Transverse colon (tissue), 4 donors: ENCODE measurements at regions of chr11 and their contacts with region 1.

Region 1: DNA sequence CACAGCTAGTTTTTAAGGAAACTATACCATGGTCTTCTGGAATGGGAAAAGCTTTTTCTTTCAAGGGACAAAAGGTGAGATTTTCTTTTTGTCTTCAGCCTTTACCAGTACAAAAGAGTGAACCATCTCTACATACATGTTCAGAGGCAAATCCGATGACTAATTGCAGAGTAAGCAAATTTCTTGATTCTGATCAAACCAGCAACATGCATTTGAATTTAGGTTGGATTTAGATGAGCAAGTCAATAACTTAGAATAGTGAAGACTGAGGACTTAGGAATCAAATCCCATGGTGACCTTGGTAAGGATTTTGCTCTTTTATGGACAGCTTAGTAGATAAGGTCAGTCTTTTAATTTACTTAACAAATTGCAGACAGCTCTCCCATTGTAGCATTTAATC is 65.9 kb upstream of the BLID start:
- DNase-seq: no peak
- H3K4me3 ChIP-seq: no peak overlapping the region
- H3K27ac ChIP-seq: no peak overlapping the region
- H3K4me1 ChIP-seq: peaks cover 0 to 2% (median 0%) of the 10 kb centered on the region in 4 donors
- H3K27me3 ChIP-seq: no peaks in the 10 kb centered on the region
- CTCF ChIP-seq: no peak
- EP300 ChIP-seq: no peak
- POLR2A ChIP-seq: no peak

Region 2: GRCh38 chr11:122156940-122157382 is 24.9 kb before region 1 on chr11:
- in situ Hi-C with region 1: no loop called
- intact Hi-C with region 1: loop called (anchors 1 kb)
- DNase-seq: no peak
- H3K4me3 ChIP-seq: peak overlapping the region in 3 of 4 donors; percentile 17 to 38 (median 19)
- H3K27ac ChIP-seq: peak overlapping the region; percentile 40 to 84 (median 74)
- H3K4me1 ChIP-seq: peaks cover 0 to 4% (median 2%) of the 10 kb centered on the region in 4 donors
- H3K27me3 ChIP-seq: no peaks in the 10 kb centered on the region
- CTCF ChIP-seq: no peak
- EP300 ChIP-seq: no peak
- POLR2A ChIP-seq: no peak